ENCODE measurements at regions of chr7 and their contacts with region 1.

Region 1: GRCh38 chr7:48182718-48183369 is 11.6 kb downstream of the ABCA13 start:
- DNase-seq: no peak
- H3K4me3 Mint-ChIP-seq: no peak overlapping the region
- H3K27ac Mint-ChIP-seq: no peak overlapping the region
- H3K4me1 Mint-ChIP-seq: peaks cover 14% of the 10 kb centered on the region
- H3K27me3 Mint-ChIP-seq: peaks cover 7% of the 10 kb centered on the region

Region 2: GRCh38 chr7:48251766-48252165 is 68.9 kb after region 1 on chr7:
- intact Hi-C with region 1: loop called (anchors 5 kb)
- DNase-seq: no peak
- H3K4me3 Mint-ChIP-seq: no peak overlapping the region
- H3K27ac Mint-ChIP-seq: peak overlapping the region; percentile 26
- H3K4me1 Mint-ChIP-seq: peaks cover 9% of the 10 kb centered on the region
- H3K27me3 Mint-ChIP-seq: peaks cover 9% of the 10 kb centered on the region

Region 3: DNA sequence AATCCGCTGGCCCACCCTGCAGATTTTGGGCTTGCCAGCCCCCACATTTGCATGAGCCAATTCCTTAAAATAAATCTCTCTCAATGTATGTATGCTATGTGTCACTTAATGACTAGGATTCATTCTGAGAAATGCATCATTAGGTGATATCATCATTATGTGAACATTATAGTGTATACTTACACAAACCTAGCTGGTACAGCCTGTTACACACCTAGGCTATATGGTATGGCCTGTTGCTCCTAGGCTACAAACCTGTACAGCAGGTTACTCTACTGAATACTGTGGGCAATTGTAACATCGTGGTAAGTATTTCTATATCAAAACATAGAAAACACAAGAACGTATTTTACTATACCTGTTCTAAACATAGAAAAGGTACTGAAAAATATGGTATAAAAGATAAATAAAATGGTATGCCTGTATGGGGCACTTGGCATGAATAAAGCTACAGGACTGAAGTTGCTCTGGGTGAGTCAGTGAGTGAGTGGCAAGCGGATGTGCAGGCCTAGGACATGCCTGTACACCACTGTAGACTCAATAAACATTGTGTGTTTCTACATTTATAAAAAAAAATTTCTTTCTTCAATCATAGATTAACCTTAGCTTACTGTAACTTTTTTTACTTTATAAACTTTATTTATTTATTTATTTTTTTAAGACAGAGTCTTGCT is 124.3 kb after region 1 on chr7:
- intact Hi-C with region 1: no loop called
- DNase-seq: no peak
- H3K4me3 Mint-ChIP-seq: no peak overlapping the region
- H3K27ac Mint-ChIP-seq: no peak overlapping the region
- H3K4me1 Mint-ChIP-seq: no peaks in the 10 kb centered on the region
- H3K27me3 Mint-ChIP-seq: peaks cover 1% of the 10 kb centered on the region